ENCODE measurements at regions of chr18 and their contacts with region 1.

Region 1: GRCh38 chr18:50944245-50944932 is 23.5 kb upstream of the ELAC1 start:
- DNase-seq: peak; percentile 1
- ATAC-seq: peak; percentile 49; the same call in 1 of the 2 replicates
- H3K4me3 ChIP-seq: no peak overlapping the region
- H3K27ac ChIP-seq: no peak overlapping the region
- H3K4me1 ChIP-seq: no peaks in the 10 kb centered on the region; the same call in 1 of the 2 replicates
- H3K27me3 ChIP-seq: no peaks in the 10 kb centered on the region
- CTCF ChIP-seq: no peak

Region 2: DNA sequence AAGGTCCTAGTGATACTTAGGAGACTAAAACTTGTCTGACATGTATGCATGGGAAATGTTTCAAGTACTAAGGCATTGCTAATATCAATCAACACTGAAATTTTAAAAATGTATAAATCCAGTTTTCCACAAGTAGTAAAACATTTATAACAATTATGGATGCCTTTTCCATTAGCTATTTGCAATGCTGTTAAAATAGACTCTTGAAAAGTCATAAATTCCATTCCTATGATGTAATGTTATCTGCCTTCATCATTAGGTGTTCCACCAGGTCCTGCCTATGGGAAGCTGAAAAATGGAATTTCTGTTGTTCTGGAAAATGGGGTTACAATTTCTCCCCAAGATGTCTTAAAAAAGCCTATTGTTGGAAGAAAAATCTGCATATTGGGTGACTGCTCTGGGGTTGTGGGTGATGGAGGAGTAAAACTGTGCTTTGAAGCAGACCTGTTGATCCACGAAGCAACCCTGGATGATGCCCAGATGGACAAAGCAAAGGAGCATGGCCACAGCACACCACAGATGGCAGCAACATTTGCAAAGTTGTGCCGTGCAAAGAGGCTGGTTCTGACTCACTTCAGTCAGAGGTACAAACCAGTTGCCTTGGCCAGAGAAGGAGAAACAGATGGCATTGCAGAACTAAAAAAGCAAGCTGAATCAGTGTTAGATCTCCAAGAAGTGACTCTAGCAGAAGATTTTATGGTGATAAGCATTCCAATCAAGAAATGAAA is 42.1 kb after region 1 on chr18:
- CTCF ChIA-PET with region 1: no interaction called
- POLR2A ChIA-PET with region 1: interaction called, 14 read pairs
- intact Hi-C with region 1: no loop called
- DNase-seq: peak; percentile 23
- ATAC-seq: peak; percentile 27; the same call in 1 of the 2 replicates
- H3K4me3 ChIP-seq: no peak overlapping the region
- H3K27ac ChIP-seq: no peak overlapping the region
- H3K4me1 ChIP-seq: peaks cover 5% of the 10 kb centered on the region; the same call in 1 of the 2 replicates
- H3K27me3 ChIP-seq: no peaks in the 10 kb centered on the region
- CTCF ChIP-seq: no peak

Measured in PC-3 (cell line).